Calu3 (cell line): ENCODE measurements at regions of chr5 and their contacts with region 1.

Region 1: DNA sequence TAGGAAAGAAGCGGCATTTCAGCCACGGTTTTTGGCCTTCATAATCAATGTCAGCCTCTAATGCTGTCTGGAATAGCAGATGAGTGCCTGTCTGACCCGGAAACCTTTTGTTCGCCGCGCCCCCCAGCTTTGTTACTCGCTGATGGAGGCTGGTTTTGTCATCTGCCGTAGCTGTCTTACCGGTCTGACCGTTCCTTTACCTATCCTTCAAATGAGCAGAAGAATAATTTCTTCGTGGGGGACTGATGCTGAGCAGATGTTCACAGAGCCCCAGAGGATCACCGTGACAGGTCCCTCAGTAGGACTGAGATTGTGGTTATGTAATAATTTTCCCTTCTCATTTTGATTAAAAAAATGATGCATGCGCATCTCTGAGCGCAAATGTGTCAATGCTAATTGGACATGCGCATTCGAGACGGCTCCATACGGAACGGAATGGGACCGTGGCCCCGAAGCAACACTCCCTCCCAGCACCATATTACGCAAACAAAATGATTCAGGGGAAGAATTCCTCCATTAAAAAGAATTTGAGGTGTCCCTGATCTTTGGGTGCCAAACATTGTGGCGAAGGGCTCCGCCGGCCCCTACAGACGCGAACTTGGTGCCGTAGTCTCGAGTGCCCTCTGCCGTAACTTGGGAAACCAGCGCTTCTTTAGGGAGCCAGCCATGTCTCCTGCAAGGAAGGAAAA is 27.6 kb downstream of the TLX3 start:
- DNase-seq: peak; percentile 68
- H3K4me3 Mint-ChIP-seq: peak overlapping the region; percentile 70
- H3K27ac Mint-ChIP-seq: no peak overlapping the region
- H3K4me1 Mint-ChIP-seq: no peaks in the 10 kb centered on the region
- H3K27me3 Mint-ChIP-seq: peaks cover 22% of the 10 kb centered on the region
- CTCF ChIP-seq: peak; percentile 80

Region 2: GRCh38 chr5:170120576-170120975 is 1216.1 kb before region 1 on chr5:
- CTCF ChIA-PET with region 1: no interaction called
- intact Hi-C with region 1: no loop called
- DNase-seq: no peak
- H3K4me3 Mint-ChIP-seq: no peak overlapping the region
- H3K27ac Mint-ChIP-seq: no peak overlapping the region
- H3K4me1 Mint-ChIP-seq: no peaks in the 10 kb centered on the region
- H3K27me3 Mint-ChIP-seq: peaks cover 25% of the 10 kb centered on the region
- CTCF ChIP-seq: no peak

Region 3: DNA sequence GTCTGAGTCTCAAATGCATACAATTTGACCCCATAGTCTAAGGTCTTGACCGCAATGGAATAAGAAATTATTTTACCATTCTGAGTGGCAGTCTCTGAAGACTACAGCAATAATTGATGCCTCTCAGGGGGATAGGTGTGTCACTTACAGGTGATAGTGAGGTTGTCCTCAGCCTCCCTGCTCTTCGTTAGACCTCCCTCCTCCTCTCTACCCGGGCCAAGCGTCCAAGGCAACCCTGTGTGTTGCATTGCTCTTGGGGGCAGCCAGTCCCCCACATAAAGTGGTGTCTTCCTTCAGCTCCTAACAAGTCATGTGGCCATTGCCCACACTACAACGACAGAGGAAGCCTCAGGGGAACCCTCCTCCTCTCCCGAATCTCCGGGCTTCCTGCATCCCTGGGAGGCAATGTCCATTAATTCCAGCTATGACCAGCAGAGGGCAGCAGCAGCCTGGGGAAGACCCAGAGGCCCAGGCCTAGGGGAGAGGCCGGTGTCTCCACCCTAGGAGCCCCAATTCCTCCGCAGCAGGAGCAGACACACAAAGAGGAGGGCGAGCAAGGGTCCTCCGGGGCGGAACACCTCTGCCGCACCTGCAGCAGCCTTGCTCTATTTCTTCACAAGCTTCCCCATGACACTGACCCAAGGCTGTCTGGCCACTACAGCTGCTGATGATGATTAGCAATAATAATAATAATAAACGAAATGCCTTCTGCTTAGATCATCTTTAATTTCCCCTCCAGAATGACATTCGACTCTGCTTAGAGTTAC is 698.0 kb before region 1 on chr5:
- CTCF ChIA-PET with region 1: interaction called, 4 read pairs
- intact Hi-C with region 1: loop called (anchors 2 kb)
- DNase-seq: peak; percentile 90
- H3K4me3 Mint-ChIP-seq: no peak overlapping the region
- H3K27ac Mint-ChIP-seq: no peak overlapping the region
- H3K4me1 Mint-ChIP-seq: peaks cover 19% of the 10 kb centered on the region
- H3K27me3 Mint-ChIP-seq: peaks cover 30% of the 10 kb centered on the region
- CTCF ChIP-seq: peak; percentile 97

Region 4: GRCh38 chr5:170809551-170809950 is 527.1 kb before region 1 on chr5:
- CTCF ChIA-PET with region 1: no interaction called
- intact Hi-C with region 1: loop called (anchors 2 kb)
- DNase-seq: no peak
- H3K4me3 Mint-ChIP-seq: no peak overlapping the region
- H3K27ac Mint-ChIP-seq: peak overlapping the region; percentile 55
- H3K4me1 Mint-ChIP-seq: no peaks in the 10 kb centered on the region
- H3K27me3 Mint-ChIP-seq: no peaks in the 10 kb centered on the region
- CTCF ChIP-seq: peak; percentile 60

Region 5: DNA sequence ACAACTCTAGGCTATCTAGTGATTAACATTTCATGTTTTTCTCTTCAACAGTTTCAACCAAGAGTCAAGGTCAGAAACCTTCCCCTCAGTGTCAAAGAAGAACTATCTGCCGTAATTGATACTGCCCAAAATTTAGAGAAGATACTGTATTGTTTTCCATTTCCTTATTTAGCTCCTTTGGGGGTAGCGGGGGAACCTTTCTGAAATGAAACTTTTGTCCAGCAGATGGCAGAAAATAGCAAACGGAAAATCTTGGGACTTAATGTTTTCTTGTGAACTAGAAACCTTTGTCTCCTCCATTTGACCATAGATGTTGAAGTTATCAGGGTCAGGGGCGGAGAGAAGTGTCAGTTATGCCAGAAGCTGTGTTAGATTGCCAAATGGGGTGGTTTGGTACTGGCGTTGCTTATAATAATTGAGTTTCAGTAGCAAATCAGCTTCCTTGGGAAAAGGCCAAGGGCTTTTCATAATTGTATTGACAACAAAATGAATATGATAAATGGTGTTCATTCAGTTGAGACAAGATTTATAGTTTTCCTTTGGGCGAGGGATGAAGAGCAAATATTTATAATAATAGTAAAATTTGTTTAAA is 129.3 kb before region 1 on chr5:
- CTCF ChIA-PET with region 1: interaction called, 10 read pairs
- intact Hi-C with region 1: loop called (anchors 1 kb)
- DNase-seq: peak; percentile 47
- H3K4me3 Mint-ChIP-seq: no peak overlapping the region
- H3K27ac Mint-ChIP-seq: no peak overlapping the region
- H3K4me1 Mint-ChIP-seq: no peaks in the 10 kb centered on the region
- H3K27me3 Mint-ChIP-seq: no peaks in the 10 kb centered on the region
- CTCF ChIP-seq: peak; percentile 61

Region 6: GRCh38 chr5:171318026-171318425 is 18.6 kb before region 1 on chr5:
- CTCF ChIA-PET with region 1: interaction called, 3 read pairs
- intact Hi-C with region 1: loop called (anchors 2 kb)
- DNase-seq: no peak
- H3K4me3 Mint-ChIP-seq: no peak overlapping the region
- H3K27ac Mint-ChIP-seq: no peak overlapping the region
- H3K4me1 Mint-ChIP-seq: no peaks in the 10 kb centered on the region
- H3K27me3 Mint-ChIP-seq: peaks cover 21% of the 10 kb centered on the region
- CTCF ChIP-seq: no peak